ENCODE measurements at regions of chr17 and their contacts with region 1.

Region 1: DNA sequence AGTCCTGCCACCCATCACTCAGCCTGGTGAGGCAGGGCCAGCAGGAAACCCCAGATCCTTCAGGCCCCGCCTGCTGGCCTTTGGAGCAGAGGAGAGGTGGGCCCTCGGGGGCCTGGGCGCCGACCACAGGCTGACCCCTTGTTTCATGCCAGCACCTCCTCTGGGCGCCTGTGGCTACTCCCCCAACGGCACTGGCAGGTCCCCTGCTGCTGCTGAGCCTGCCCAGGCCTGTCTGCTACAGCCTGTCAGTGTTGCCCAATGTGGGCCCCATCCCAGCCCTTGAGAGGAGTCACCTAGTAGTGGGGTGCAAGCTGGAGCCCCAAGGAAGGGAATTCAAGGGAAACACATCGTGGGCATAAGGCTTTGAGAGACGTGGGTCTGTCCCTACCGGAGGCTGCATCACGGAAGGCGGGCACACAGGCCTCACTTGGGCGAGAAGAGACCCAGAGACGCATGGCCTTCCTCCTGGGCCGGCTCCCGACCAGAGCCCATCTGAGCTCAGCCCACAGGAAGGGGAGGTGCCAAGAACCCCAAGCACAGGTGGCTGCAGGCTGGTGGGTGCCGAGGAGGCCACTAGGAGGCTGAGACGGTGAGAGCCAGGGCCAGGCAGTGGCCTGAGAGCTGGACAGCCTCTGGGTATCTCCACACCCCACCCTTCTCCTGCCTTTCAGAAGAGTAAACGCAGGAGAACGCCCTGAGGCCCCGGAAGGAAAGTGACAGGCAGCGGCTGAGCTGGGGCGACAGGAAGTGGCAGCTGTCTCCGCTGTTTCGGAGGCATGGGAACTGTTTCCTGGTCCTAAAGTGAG is 8.0 kb upstream of the FASN start:
- DNase-seq: peak; percentile 14 to 69 (median 56)
- ATAC-seq: peak; percentile 89
- H3K4me3 ChIP-seq: peak overlapping the region; percentile 73
- H3K4me3 Mint-ChIP-seq: peak overlapping the region; percentile 87 to 94 (median 90)
- H3K27ac ChIP-seq: peak overlapping the region; percentile 89
- H3K27ac Mint-ChIP-seq: peak overlapping the region; percentile 95 to 99 (median 97)
- H3K4me1 ChIP-seq: peaks cover 17 to 25% of the 10 kb centered on the region in 2 donors
- H3K4me1 Mint-ChIP-seq: peaks cover 18 to 44% (median 32%) of the 10 kb centered on the region in 7 donors
- H3K27me3 ChIP-seq: no peaks in the 10 kb centered on the region
- H3K27me3 Mint-ChIP-seq: no peaks in the 10 kb centered on the region

Region 2: DNA sequence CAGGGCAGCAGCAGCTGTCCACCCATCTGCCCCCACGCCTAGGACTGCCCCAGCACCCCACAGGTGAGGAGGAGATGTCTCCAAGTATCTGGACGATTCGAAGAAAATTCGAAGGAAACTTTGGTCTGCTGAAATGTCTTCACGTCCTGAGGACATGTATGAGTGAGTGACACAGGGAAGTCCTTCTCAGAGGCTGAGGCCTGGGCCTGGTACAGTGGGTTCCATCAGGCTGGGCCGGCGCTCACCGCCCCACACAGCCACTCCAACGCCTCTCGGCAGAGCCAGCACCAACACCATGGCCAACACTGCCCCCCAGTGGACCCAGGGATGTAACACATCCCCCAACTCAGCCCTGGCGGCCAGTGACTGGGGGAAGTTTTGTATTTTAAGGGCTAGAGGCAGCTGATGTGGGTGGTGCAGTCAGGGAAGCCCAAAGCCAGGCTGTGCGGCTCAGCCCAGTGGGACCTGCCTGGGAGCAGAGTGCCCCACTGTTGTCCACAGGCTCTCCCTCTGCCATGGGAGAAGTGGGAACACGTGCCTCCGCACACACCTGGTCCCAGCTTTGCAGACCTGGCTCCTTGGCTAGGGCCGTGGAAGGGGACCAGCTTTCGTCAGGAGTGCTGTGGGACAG is 47.8 kb after region 1 on chr17:
- CTCF ChIA-PET with region 1: interaction called, 12 read pairs
- POLR2A ChIA-PET with region 1: interaction called, 5 read pairs
- intact Hi-C with region 1: loop called (anchors 1 to 2 kb)
- DNase-seq: peak; percentile 76 to 91 (median 82)
- ATAC-seq: peak; percentile 99
- H3K4me3 ChIP-seq: no peak overlapping the region
- H3K4me3 Mint-ChIP-seq: no peak overlapping the region
- H3K27ac ChIP-seq: no peak overlapping the region
- H3K27ac Mint-ChIP-seq: peak overlapping the region in 7 of 9 donors; percentile 23 to 97 (median 87)
- H3K4me1 ChIP-seq: peaks cover 0 to 10% of the 10 kb centered on the region in 2 donors
- H3K4me1 Mint-ChIP-seq: peaks cover 5 to 20% (median 10%) of the 10 kb centered on the region in 7 donors
- H3K27me3 ChIP-seq: no peaks in the 10 kb centered on the region
- H3K27me3 Mint-ChIP-seq: no peaks in the 10 kb centered on the region